Thyroid gland (tissue), 4 donors: ENCODE measurements at regions of chr1 and their contacts with region 1.

Region 1: DNA sequence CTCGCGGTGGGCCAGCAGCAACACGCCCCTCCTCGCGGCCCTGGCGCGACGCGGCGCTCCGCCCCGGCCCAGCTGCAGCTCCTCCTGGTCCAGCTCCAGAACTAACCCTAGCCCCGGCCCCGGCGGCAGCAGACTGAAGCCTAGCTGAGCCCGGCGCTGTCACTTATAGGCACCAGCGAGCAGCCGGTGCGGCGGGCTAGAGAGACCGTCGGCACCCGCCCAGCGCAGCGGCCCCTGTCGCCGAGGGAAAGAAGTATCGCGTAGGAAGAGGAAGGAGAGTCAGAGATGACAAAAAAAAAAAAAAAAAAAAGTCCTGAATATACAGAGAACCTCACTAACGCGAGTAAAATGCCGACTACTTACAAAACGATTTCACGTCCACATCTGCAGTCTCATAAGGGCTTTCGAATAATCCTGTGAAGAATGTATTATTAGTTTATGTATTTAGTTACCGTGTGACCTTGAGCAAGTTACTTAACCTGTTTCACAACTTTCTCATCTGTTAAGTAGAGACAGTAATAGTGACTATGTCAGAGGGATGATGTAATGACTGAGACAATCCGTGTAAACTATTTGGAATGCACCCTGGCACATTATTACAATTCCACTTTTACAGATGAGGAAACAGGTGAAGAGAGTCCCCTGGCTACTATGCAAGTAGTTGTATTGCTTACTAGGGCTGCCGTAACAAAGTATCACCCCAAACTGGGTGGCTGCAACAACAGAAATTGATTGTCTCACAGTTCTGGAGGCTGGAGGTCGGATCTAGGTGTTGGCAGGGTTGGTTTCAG is at the start of gene SLC9A1:
- DNase-seq: peak; percentile 94
- H3K4me3 ChIP-seq: peak within 1 kb of the TSS; percentile 18 to 46 (median 28)
- H3K27ac ChIP-seq: peak within 1 kb of the TSS; percentile 83 to 90 (median 87)
- H3K4me1 ChIP-seq: peaks cover 28 to 39% of the 10 kb centered on the region in 2 donors
- H3K27me3 ChIP-seq: no peaks in the 10 kb centered on the region
- CTCF ChIP-seq: peak; percentile 33 to 83 (median 72)
- POLR2A ChIP-seq: peak; percentile 98 to 99
- total RNA-seq, gene SLC9A1: 13.3 to 26.1 (median 19.9) TPM

Region 2: GRCh38 chr1:26838474-26839338 is 316.5 kb before region 1 on chr1:
- intact Hi-C with region 1: no loop called
- DNase-seq: no peak
- H3K4me3 ChIP-seq: no peak overlapping the region
- H3K27ac ChIP-seq: peak overlapping the region in 1 of 3 donors; percentile 12
- H3K4me1 ChIP-seq: no peaks in the 10 kb centered on the region
- H3K27me3 ChIP-seq: no peaks in the 10 kb centered on the region
- CTCF ChIP-seq: no peak
- POLR2A ChIP-seq: no peak

Region 3: DNA sequence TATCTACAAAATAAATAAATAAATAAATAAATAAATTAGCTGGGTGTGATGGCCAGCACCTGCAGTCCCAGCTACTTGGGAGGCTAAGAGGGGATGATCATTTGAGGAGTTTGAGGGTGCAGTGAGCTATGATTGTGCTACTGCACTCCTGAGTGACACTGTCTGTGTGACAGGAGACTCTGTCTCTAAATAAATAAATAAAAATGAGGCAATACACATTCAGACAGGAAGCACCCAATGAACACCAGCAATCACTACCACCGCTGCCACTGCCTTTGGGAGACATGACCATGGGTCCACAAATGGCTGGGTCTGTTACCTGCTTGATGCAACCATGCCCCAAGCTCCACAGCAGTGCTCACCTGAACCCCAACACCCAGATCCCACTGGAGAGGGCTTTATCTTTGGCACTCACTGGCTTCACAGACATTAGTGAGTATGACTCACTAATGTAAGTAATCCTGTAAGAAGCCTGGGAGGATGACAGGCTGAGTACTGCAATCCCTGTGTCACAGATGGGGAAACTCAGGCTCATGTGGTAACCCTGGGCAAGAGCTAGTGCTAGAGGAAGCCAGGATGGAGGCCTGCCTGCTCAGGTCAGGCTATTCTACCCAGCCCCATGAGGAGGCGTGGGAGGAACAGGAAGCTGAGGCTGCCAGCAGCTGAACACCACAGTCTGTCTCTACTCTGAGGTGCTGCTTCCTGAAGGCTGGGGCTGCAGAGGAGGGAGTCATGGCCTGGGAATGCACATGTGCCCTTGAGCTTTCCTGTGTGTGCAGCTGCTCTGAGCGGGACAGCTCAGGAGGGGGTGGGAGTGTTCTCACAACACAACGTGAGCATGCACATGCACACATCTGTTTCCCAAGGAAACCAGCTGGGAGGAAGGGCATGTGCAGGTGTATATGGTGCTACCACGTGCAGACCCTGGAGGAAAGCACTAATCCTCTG is 43.3 kb before region 1 on chr1:
- intact Hi-C with region 1: loop called (anchors 5 kb)
- DNase-seq: peak; percentile 39 to 41
- H3K4me3 ChIP-seq: no peak overlapping the region
- H3K27ac ChIP-seq: no peak overlapping the region
- H3K4me1 ChIP-seq: peaks cover 0 to 29% of the 10 kb centered on the region in 2 donors
- H3K27me3 ChIP-seq: no peaks in the 10 kb centered on the region
- CTCF ChIP-seq: no peak
- POLR2A ChIP-seq: no peak

Region 4: DNA sequence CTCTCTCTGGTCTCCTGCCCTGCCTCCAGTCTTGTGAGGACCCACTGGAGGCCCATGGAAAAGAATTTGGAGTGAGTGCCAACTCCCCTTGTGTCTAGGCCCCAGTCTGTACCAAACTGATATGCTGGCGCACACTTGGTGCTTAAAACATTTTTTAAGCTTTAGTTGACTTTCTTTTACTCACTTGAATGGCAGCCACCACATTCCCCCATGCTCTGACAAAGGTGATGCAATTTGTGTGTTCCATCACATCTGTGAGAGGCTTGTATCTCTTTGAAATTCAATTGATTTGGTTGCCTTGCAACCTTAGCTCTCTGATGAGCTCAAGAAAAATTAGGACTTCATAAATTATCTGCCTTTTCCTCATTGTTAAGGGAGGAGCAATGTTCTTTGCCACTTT is 48.8 kb after region 1 on chr1:
- intact Hi-C with region 1: no loop called
- DNase-seq: no peak
- H3K4me3 ChIP-seq: no peak overlapping the region
- H3K27ac ChIP-seq: no peak overlapping the region
- H3K4me1 ChIP-seq: no peaks in the 10 kb centered on the region
- H3K27me3 ChIP-seq: no peaks in the 10 kb centered on the region
- CTCF ChIP-seq: no peak
- POLR2A ChIP-seq: no peak

Region 5: GRCh38 chr1:27234049-27234882 is 79.1 kb after region 1 on chr1 and contains the start of gene WDTC1:
- intact Hi-C with region 1: loop called (anchors 10 kb)
- DNase-seq: peak; percentile 98
- H3K4me3 ChIP-seq: peak within 1 kb of the TSS in 2 of 3 donors; percentile 47 to 99
- H3K27ac ChIP-seq: peak within 1 kb of the TSS; percentile 61 to 87 (median 86)
- H3K4me1 ChIP-seq: peaks cover 22% of the 10 kb centered on the region in 2 donors
- H3K27me3 ChIP-seq: no peaks in the 10 kb centered on the region
- CTCF ChIP-seq: no peak
- POLR2A ChIP-seq: peak in 1 of 2 donors; percentile 86
- total RNA-seq, gene WDTC1: 46.1 to 66.6 (median 48.1) TPM